CD4-positive, alpha-beta memory T cell (primary cell): ENCODE measurements at regions of chr5 and their contacts with region 1.

Region 1: DNA sequence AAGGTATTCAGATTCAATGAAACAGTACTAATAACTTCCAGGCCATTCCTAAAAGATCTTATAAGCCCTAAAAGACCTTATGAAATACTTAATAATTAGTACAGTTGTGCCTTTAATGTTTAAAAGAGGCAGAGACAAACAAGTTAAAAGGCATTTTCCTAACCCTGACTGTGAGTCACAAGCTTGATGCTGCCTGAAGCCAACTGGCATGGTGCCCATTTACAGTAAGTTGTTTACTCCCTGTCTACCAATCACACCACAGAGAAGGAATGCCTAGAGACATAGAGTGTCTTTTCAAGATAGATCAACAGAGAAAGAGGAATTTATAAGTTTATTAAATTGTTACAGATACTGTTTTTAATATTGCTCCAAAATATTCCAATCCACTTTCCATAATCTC is 47.8 kb downstream of the NR3C1 start:
- DNase-seq: peak; percentile 64 to 88 (median 74)
- H3K4me3 ChIP-seq: no peak overlapping the region
- H3K4me3 Mint-ChIP-seq: peak overlapping the region in 7 of 8 donors; percentile 28 to 64 (median 35)
- H3K27ac ChIP-seq: no peak overlapping the region
- H3K27ac Mint-ChIP-seq: peak overlapping the region; percentile 38 to 73 (median 57)
- H3K4me1 ChIP-seq: peaks cover 99% of the 10 kb centered on the region
- H3K4me1 Mint-ChIP-seq: peaks cover 59 to 89% (median 72%) of the 10 kb centered on the region in 4 donors
- H3K27me3 ChIP-seq: no peaks in the 10 kb centered on the region
- H3K27me3 Mint-ChIP-seq: no peaks in the 10 kb centered on the region

Region 2: DNA sequence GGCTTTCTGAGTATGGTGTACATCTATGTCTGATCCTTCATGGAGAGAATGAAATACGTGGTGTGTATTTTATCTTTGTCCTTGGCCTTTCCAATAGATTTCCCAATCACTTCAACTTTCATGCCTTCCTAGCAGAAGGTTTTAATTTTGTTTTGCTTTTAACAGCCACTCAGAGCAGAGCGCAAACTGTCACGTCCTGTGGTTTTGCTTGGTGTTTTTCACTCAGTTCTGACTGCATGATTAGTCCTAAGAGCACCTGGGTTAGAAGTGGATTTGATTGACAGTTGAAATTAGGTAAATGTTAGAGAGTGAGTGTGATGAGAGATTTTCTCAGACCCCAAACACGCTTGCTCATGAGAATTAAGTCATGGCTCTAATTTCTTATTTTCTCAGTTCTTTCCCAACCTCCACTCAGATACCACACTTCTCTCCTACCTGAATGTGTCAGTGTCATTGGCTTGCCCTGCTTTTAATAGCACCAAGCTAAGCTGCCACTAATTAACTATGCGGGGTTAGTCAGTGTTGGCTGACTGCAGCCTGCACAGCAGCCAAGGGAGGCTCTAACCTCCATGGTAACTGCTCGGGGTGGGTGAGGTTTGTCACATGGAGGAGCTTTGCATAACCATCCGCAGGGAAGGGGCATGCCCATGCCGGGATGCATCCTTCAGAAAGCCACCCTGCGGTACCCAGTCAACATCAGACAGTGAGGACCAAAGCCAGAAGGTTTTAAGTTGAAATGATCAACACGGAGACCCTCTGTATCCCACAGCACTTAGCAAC is 125.6 kb before region 1 on chr5:
- CTCF ChIA-PET with region 1: no interaction called
- POLR2A ChIA-PET with region 1: no interaction called
- intact Hi-C with region 1: no loop called
- DNase-seq: peak; percentile 54 to 71 (median 67)
- H3K4me3 ChIP-seq: peak overlapping the region in 1 of 2 donors; percentile 31
- H3K4me3 Mint-ChIP-seq: peak overlapping the region; percentile 60 to 81 (median 79)
- H3K27ac ChIP-seq: peak overlapping the region; percentile 57
- H3K27ac Mint-ChIP-seq: peak overlapping the region; percentile 69 to 97 (median 88)
- H3K4me1 ChIP-seq: peaks cover 28% of the 10 kb centered on the region
- H3K4me1 Mint-ChIP-seq: peaks cover 18 to 37% (median 33%) of the 10 kb centered on the region in 4 donors
- H3K27me3 ChIP-seq: no peaks in the 10 kb centered on the region
- H3K27me3 Mint-ChIP-seq: no peaks in the 10 kb centered on the region

Region 3: DNA sequence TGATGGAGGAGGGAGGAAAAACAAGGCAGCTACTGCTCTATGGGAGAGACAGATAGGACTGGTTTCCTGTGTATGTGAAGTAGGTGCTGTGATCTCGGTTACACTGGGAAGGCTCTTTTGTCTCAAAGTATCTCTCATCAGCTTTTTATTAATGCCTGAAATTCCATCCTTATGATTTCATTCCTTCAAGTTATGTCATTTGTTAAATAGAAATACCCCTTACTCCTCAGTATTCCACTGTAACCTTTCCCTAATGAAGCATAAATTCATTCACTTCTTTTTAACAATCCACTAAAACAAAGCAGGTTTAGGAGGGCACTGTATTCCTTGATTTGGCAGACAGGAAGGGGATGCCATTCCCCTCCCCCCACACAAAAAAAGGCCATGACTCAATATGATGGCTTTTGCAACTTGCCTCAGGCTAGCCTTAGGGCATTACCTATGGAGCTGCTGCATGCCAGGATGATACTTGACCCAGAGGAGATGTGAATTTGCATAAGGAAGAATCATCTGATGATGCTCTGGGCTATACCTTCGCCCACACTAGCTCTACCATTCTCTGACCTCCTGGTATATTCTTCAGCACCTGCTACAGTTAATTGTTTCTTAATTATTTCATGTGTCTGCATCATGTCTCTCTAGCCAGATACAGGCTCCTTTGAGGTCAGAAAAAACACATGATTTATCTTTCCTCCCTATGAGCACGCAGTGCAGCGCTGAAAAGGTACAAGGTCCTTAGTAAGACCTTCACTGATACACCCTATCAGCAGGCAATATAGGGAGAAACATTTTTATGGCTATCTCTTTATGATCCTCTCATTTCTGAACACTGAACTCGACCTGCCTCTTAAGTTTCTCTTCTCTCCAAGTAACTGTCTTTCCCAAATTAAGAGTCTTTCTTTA is 21.4 kb after region 1 on chr5:
- CTCF ChIA-PET with region 1: no interaction called
- POLR2A ChIA-PET with region 1: no interaction called
- intact Hi-C with region 1: loop called (anchors 2 kb)
- DNase-seq: no peak
- H3K4me3 ChIP-seq: no peak overlapping the region
- H3K4me3 Mint-ChIP-seq: peak overlapping the region in 4 of 8 donors; percentile 0 to 61 (median 22)
- H3K27ac ChIP-seq: no peak overlapping the region
- H3K27ac Mint-ChIP-seq: peak overlapping the region; percentile 12 to 79 (median 47)
- H3K4me1 ChIP-seq: peaks cover 72% of the 10 kb centered on the region
- H3K4me1 Mint-ChIP-seq: peaks cover 65 to 94% (median 81%) of the 10 kb centered on the region in 4 donors
- H3K27me3 ChIP-seq: no peaks in the 10 kb centered on the region
- H3K27me3 Mint-ChIP-seq: no peaks in the 10 kb centered on the region

Region 4: DNA sequence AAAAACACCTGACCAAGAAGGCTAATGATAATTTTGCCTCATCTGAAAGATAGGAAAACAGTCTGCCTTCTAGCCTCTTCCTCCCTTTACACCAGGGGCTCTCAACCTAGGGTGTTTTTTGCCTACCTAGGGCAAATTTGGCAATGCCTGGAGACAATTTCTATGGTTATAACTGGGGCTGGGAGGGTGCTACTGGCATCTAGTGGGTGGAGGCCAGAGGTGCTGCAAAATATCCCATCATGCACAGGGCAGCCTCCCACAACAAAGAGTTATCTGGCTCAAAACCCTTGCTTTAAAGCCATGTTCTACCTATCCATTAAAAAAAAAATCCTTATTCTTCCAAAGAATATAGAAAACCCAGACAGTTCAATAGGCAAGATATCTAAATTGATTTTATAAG is 92.8 kb after region 1 on chr5:
- CTCF ChIA-PET with region 1: interaction called, 3 read pairs
- POLR2A ChIA-PET with region 1: no interaction called
- intact Hi-C with region 1: loop called (anchors 5 kb)
- DNase-seq: peak in 4 of 5 donors; percentile 22 to 31 (median 26)
- H3K4me3 ChIP-seq: no peak overlapping the region
- H3K4me3 Mint-ChIP-seq: no peak overlapping the region
- H3K27ac ChIP-seq: no peak overlapping the region
- H3K27ac Mint-ChIP-seq: peak overlapping the region in 2 of 7 donors; percentile 56 to 57
- H3K4me1 ChIP-seq: peaks cover 11% of the 10 kb centered on the region
- H3K4me1 Mint-ChIP-seq: peaks cover 4 to 24% (median 12%) of the 10 kb centered on the region in 4 donors
- H3K27me3 ChIP-seq: no peaks in the 10 kb centered on the region
- H3K27me3 Mint-ChIP-seq: no peaks in the 10 kb centered on the region